ENCODE measurements at regions of chr17 and their contacts with region 1.

Region 1: DNA sequence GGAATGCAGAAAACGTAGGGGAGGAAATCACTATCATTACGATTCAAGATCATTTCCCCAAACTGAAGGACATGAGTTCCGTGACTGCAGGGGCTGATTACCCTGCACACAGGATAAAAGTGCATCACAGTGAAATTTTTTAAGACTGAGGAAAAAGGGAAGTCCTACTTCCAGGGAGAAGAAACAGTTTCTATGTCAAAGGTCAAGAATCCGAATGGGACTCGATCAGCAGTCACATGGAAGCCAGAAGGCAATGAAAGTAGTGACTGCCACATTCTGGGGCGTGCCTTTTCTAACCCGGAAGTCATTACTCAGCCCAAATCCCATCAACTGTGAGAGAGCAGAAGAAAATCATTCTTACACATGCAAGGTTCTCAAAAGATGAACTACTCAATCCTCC is 12.1 kb downstream of the ZZEF1 start:
- DNase-seq: no peak
- ATAC-seq: no peak
- H3K4me3 ChIP-seq: no peak overlapping the region
- H3K27ac ChIP-seq: no peak overlapping the region
- H3K4me1 ChIP-seq: peaks cover 6% of the 10 kb centered on the region; the same call in 1 of the 2 replicates
- H3K27me3 ChIP-seq: no peaks in the 10 kb centered on the region
- CTCF ChIP-seq: no peak
- EP300 ChIP-seq: no peak
- POLR2A ChIP-seq: no peak
- RAD21 ChIP-seq: no peak

Region 2: DNA sequence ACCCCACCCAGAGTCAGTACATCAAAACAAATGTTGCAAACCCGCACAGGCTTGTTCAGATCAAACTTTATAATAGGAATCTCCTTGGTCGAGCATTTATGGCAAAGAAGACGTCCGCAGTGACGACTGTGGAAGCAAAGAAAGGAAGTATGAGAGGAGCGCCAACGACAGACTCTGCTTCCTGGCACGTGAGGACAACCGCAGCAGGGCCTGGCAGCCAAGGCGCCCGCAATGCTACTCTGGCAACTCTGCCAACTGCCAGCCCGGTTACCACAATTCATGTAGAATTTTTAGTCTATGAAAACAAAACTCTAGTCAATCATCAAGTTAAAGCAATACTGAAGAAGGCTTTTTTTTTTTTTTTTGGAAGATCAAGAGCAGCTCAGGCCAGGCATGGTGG is 37.1 kb after region 1 on chr17:
- CTCF ChIA-PET with region 1: no interaction called
- POLR2A ChIA-PET with region 1: no interaction called
- in situ Hi-C with region 1: no loop called
- intact Hi-C with region 1: loop called (anchors 2 kb)
- DNase-seq: no peak
- ATAC-seq: no peak
- H3K4me3 ChIP-seq: no peak overlapping the region
- H3K27ac ChIP-seq: no peak overlapping the region
- H3K4me1 ChIP-seq: no peaks in the 10 kb centered on the region
- H3K27me3 ChIP-seq: no peaks in the 10 kb centered on the region
- CTCF ChIP-seq: no peak
- EP300 ChIP-seq: no peak
- POLR2A ChIP-seq: no peak
- RAD21 ChIP-seq: no peak